BJ (cell line): ENCODE measurements at regions of chr3 and their contacts with region 1.

Region 1: GRCh38 chr3:25648107-25648535 is 16.6 kb downstream of the TOP2B start:
- DNase-seq: peak; percentile 28
- H3K4me3 ChIP-seq: no peak overlapping the region
- H3K27me3 ChIP-seq: no peaks in the 10 kb centered on the region
- CTCF ChIP-seq: peak; percentile 87

Region 2: GRCh38 chr3:25281041-25281731 is 366.9 kb before region 1 on chr3:
- CTCF ChIA-PET with region 1: no interaction called
- POLR2A ChIA-PET with region 1: no interaction called
- DNase-seq: no peak
- H3K4me3 ChIP-seq: no peak overlapping the region
- H3K27me3 ChIP-seq: no peaks in the 10 kb centered on the region
- CTCF ChIP-seq: no peak

Region 3: DNA sequence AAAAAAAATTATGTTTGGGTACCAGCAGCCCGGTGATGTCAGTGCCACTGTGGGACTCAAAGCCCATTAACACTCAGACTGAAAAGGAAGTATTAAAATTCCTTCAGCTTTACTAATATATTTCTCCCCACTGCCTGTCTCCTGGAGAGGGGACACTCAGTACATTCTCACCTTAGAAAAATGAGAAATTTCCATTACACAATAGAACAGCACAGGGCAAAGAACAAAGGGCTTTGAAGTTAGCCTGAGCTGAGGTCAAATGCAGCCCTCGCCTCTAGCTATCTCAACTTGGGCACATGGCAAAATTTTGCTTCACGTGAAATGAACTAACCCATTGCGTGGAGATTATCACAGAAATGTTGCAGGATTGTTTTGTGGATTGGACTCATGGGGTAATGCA is 139.2 kb before region 1 on chr3:
- CTCF ChIA-PET with region 1: no interaction called
- POLR2A ChIA-PET with region 1: no interaction called
- DNase-seq: peak; percentile 35
- H3K4me3 ChIP-seq: no peak overlapping the region
- H3K27me3 ChIP-seq: no peaks in the 10 kb centered on the region
- CTCF ChIP-seq: no peak

Region 4: DNA sequence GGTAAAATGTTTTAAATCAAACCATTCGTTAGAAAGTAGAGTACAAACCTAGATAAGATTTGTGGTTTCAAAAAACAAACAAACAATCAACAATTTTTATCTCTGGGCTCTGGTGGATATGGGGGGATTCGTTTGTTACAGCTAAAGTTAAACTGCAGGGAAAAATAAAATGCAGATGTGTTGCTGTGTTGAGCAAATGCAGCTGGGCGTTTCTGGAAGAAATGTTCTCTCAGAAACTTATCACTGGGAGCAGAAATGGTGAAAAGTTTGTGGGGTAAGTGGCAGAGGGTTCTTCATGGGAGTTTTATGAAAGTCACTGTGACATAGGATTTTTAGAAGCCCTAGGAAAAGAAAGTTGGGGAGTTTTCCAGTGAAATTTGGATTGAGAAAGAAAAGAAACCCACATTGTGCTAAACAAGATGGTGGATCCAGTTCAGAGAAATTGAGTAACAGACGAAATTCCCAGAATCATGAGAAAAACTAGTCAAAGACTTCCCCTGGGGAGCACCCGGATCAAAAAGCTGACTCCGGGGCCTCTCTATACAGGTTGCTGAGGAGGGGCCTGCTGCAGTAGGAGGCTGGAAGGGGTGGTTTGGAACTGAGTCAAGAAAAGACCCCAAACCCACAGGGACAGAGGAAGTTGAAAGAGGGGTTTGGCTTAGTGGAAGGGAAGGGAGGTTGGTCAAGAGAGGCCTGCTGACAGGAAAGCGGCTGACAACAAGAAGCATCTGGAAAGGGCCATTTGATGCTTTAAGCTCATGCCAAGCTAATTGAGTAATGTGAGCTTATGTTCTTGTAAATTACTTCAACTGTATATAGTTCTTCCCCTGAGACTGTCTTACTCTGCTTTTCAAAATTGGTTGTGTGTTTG is 111.4 kb before region 1 on chr3:
- CTCF ChIA-PET with region 1: no interaction called
- POLR2A ChIA-PET with region 1: no interaction called
- DNase-seq: no peak
- H3K4me3 ChIP-seq: no peak overlapping the region
- H3K27me3 ChIP-seq: no peaks in the 10 kb centered on the region
- CTCF ChIP-seq: no peak

Region 5: DNA sequence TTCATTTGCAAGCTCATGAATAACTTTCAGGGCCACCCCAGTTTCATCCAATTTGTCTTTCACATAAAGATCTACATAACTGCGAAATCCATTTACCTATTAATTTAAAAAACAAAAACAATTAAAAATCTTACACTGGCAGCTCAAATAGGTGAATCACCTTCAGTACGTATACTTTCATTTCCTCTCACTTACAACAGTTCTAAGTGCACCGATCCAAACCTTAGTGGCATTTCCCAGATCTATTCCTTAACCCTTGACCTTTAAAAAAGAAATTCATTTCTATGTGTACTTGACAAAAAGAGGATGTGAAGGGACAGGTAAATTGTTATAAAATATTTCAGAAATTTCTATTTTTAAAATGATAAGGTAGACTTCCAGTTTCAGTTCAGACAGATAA is 14.2 kb before region 1 on chr3:
- CTCF ChIA-PET with region 1: interaction called, 10 read pairs
- POLR2A ChIA-PET with region 1: no interaction called
- DNase-seq: no peak
- H3K4me3 ChIP-seq: no peak overlapping the region
- H3K27me3 ChIP-seq: no peaks in the 10 kb centered on the region
- CTCF ChIP-seq: no peak

Region 6: DNA sequence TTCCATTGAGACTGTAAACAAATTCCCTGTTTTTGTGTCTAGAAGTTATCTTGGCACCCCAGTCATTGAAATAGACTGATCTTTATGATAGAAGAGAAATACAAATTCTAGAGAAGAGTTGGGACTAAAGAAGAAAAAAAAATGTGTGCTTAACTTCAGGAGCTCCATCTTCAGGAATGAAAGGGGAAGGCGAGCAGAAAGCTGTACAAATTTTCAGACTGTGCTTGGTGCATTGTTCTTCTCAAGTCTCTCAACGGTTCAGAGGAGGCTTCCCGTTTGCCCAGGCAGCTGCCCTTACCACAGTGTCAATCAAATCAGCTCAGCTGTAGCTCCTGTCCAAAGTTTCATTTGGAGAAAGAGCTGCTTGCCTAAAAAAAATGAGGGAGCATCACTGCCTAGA is 183.5 kb after region 1 on chr3:
- CTCF ChIA-PET with region 1: interaction called, 16 read pairs
- POLR2A ChIA-PET with region 1: no interaction called
- DNase-seq: no peak
- H3K4me3 ChIP-seq: no peak overlapping the region
- H3K27me3 ChIP-seq: no peaks in the 10 kb centered on the region
- CTCF ChIP-seq: peak; percentile 39

Region 7: DNA sequence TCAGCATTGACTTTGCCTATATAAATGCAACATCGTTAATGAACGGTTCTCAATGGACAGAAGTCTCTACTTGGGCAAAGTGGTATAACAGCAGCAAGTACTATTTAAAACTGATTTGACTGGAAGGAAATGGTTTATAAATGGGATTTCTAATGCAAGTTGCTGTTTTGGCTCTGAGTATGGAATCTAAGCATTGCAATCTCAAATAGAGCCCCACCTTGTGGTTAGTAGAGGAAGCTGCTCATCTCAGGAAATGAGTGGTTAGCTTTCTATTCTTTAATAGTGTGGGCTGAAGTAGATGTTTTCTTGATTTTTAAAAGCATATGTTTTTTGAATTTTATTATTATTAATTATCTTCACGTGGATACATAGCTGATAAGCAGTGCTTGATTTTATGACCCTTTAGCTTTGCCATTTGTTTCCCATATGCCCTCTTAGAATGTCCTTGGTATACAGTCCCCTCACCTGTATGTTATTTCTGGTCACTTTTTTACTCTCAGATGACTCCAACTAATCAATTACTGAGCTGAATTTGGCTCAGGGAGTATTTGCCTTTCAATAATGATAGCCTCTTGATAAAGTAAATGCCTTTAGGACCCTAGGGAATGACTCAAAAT is 208.9 kb after region 1 on chr3:
- CTCF ChIA-PET with region 1: interaction called, 64 read pairs
- POLR2A ChIA-PET with region 1: no interaction called
- DNase-seq: no peak
- H3K4me3 ChIP-seq: no peak overlapping the region
- H3K27me3 ChIP-seq: no peaks in the 10 kb centered on the region
- CTCF ChIP-seq: peak; percentile 86